ENCODE measurements at regions of chr12 and their contacts with region 1.

Region 1: GRCh38 chr12:11746024-11746771 is 96.7 kb downstream of the ETV6 start:
- DNase-seq: peak; percentile 90
- H3K4me3 Mint-ChIP-seq: no peak overlapping the region
- H3K27ac Mint-ChIP-seq: peak overlapping the region; percentile 28
- H3K4me1 Mint-ChIP-seq: peaks cover 34% of the 10 kb centered on the region
- H3K27me3 Mint-ChIP-seq: no peaks in the 10 kb centered on the region
- CTCF ChIP-seq: no peak

Region 2: DNA sequence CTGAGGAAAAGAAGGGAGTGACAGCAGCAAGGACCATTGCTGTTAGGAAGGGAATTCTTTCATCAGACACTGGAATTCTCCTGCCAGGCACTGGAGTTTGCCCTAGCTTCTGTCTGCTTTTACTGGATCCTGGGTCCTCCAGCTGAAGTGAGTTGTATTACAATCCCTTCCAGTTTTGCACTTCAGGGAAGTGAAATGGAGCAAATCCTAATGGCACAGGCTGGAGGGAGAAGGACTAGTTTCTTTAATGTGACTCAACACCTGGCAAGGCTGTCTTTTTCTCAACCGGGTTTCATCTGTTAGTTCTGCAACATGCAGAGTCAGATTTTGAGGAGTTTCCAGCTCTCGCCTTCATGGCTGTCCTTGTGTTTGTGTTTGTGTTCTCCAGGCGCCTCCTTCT is 50.9 kb before region 1 on chr12:
- CTCF ChIA-PET with region 1: no interaction called
- POLR2A ChIA-PET with region 1: interaction called, 4 read pairs
- intact Hi-C with region 1: loop called (anchors 1 kb)
- DNase-seq: peak; percentile 63
- H3K4me3 Mint-ChIP-seq: no peak overlapping the region
- H3K27ac Mint-ChIP-seq: peak overlapping the region; percentile 57
- H3K4me1 Mint-ChIP-seq: peaks cover 29% of the 10 kb centered on the region
- H3K27me3 Mint-ChIP-seq: no peaks in the 10 kb centered on the region
- CTCF ChIP-seq: no peak

Region 3: GRCh38 chr12:11705010-11705409 is 41.2 kb before region 1 on chr12:
- CTCF ChIA-PET with region 1: no interaction called
- POLR2A ChIA-PET with region 1: interaction called, 12 read pairs
- intact Hi-C with region 1: no loop called
- DNase-seq: peak; percentile 79
- H3K4me3 Mint-ChIP-seq: peak overlapping the region; percentile 14
- H3K27ac Mint-ChIP-seq: peak overlapping the region; percentile 84
- H3K4me1 Mint-ChIP-seq: peaks cover 27% of the 10 kb centered on the region
- H3K27me3 Mint-ChIP-seq: no peaks in the 10 kb centered on the region
- CTCF ChIP-seq: no peak

Region 4: GRCh38 chr12:11785712-11786111 is 39.5 kb after region 1 on chr12:
- CTCF ChIA-PET with region 1: interaction called, 3 read pairs
- POLR2A ChIA-PET with region 1: interaction called, 16 read pairs
- intact Hi-C with region 1: no loop called
- DNase-seq: peak; percentile 97
- H3K4me3 Mint-ChIP-seq: no peak overlapping the region
- H3K27ac Mint-ChIP-seq: peak overlapping the region; percentile 34
- H3K4me1 Mint-ChIP-seq: peaks cover 18% of the 10 kb centered on the region
- H3K27me3 Mint-ChIP-seq: no peaks in the 10 kb centered on the region
- CTCF ChIP-seq: no peak